Activated naive CD4-positive, alpha-beta T cell treated with anti-CD3 and anti-CD28 coated beads for 36 hours (primary cell): ENCODE measurements at regions of chr6 and their contacts with region 1.

Region 1: DNA sequence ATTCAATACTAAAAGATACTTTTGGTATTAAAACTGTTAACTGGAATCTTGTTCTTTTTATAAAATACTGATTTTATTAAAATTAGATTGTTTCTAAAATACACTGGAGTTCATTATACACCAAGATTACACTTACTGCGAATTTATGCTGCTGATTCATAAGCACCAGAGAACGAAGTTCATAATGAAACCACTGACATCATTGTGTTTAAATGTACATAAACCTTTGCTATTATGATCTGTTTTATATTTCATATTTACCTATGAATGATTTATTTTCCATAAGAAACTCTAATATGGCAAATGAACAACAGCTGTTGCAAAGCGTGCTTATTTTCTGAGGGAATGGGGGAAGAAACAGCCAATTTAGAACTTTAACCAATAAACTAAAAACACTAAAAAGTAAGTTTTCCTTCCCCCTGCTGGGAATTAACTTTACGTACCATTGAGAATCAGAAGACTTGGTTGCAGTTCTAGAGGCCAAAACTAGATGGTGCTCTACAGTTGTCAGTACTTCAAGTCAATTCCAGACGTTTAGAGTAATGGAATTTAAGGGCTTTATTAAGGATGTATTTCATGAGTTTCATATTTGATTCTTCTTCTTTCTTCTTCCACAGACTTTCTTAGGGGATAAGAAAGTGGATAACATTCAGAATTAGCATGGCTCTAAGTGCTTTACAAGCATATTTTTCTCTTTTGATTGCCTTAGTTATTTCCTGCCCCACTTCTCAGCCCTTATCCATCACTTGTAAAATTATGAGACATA is 30.8 kb upstream of the COL19A1 start:
- DNase-seq: no peak
- H3K4me3 Mint-ChIP-seq: no peak overlapping the region
- H3K27ac Mint-ChIP-seq: no peak overlapping the region
- H3K4me1 Mint-ChIP-seq: peaks cover 3% of the 10 kb centered on the region
- H3K27me3 Mint-ChIP-seq: peaks cover 5% of the 10 kb centered on the region

Region 2: DNA sequence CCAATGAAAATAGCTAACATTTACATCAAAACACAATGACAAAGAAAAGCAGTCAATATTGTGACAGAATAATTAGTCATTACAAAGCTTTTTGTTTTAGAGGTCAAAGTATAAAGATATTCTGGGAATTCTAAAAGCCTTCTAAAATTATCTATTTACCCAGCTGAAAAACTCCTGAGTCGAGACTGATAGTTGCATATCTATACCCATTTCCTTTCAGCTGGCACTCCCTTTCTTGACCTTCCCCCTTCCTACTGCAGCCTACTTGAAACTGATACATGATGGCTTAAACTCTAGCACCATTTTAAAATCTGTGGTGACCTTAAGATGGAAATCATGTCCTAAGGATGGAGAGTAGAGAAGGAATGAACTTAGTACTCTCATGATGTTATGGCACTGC is 77.4 kb before region 1 on chr6:
- CTCF ChIA-PET with region 1: no interaction called
- intact Hi-C with region 1: no loop called
- DNase-seq: no peak
- H3K4me3 Mint-ChIP-seq: no peak overlapping the region
- H3K27ac Mint-ChIP-seq: no peak overlapping the region
- H3K4me1 Mint-ChIP-seq: peaks cover 34% of the 10 kb centered on the region
- H3K27me3 Mint-ChIP-seq: no peaks in the 10 kb centered on the region

Region 3: DNA sequence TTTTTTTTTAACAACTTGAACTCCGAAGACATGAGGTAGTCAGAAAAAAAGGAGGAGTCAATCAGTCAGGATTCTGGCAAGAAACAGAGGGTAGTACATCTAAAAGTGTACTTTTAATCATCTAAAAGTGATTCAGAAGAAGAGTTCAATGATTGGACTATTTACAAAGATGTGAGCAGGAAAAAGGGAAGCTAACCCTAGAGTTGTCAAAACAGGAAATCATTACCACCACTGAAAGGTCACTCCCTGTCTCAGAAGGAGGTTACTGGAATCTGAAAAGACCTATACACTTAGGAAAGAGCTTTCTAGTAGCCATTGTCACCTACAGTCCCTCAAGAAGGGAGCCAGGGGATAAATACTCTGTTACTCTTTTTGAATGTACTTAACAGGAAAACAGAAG is 22.1 kb before region 1 on chr6:
- CTCF ChIA-PET with region 1: interaction called, 6 read pairs
- intact Hi-C with region 1: loop called (anchors 1 kb)
- DNase-seq: no peak
- H3K4me3 Mint-ChIP-seq: no peak overlapping the region
- H3K27ac Mint-ChIP-seq: peak overlapping the region; percentile 75
- H3K4me1 Mint-ChIP-seq: peaks cover 54% of the 10 kb centered on the region
- H3K27me3 Mint-ChIP-seq: no peaks in the 10 kb centered on the region

Region 4: GRCh38 chr6:69866770-69867638 is 31.4 kb after region 1 on chr6:
- CTCF ChIA-PET with region 1: no interaction called
- intact Hi-C with region 1: loop called (anchors 1 kb)
- DNase-seq: peak; percentile 64
- H3K4me3 Mint-ChIP-seq: peak overlapping the region; percentile 70
- H3K27ac Mint-ChIP-seq: no peak overlapping the region
- H3K4me1 Mint-ChIP-seq: peaks cover 20% of the 10 kb centered on the region
- H3K27me3 Mint-ChIP-seq: peaks cover 5% of the 10 kb centered on the region

Region 5: DNA sequence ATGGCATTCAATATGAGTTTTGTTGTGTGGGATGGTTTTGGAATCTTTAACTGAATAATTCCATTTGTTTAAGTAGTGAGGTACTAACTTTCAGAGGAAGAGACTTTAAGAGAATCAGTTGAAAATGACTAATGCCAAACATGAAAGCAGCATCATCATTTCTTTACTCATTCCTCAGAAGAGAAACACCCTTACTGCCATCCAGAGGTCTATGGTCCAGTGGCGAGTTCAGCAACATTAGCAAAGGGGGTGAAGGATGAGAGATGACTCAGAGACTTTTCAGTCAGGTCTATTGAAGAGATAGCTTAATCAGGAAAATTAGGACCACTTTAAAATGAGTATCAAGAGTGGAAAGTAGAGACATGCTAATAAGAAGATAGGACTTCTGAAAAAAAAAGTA is 149.6 kb after region 1 on chr6:
- CTCF ChIA-PET with region 1: no interaction called
- intact Hi-C with region 1: loop called (anchors 5 kb)
- DNase-seq: no peak
- H3K4me3 Mint-ChIP-seq: no peak overlapping the region
- H3K27ac Mint-ChIP-seq: no peak overlapping the region
- H3K4me1 Mint-ChIP-seq: no peaks in the 10 kb centered on the region
- H3K27me3 Mint-ChIP-seq: peaks cover 2% of the 10 kb centered on the region

Region 6: DNA sequence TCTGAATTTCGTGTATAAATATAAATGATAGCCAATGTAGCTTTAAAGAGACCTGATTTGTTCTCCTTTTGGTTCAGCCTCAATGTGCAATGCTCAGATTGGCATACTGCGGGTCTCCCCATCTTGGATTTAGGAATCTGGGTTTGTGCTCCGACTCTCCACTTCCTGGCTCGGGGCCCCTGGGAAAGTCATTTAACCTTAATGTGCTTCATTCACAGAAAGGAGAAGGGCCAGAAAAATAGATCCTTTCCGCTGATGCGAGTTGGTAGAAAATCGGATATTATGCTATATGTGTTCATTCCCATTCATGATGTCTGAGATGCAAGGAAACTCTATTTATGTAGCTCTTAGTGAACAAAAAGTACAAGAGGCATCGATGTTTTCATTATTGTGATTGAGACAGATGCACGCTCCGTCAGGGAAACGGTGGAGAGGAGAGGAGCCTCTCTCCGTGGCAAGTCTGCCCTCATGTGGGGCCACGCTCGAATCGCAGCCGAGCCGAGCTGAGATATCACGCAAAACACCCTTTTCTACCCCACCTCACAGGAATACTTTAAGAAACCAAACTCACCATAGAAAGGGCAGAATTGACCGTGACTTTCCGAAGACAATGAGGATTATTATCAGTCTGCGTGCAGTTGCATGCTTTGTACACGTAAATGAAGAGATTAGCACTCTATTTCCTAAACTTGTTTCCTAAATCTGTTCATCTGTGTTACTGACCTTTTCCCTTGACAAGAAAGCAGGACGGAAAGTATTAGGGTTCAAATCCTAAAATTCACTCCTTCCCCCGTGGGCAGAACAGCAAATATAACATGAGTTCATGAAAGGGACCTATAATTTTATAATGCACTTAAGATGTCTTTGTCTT is 330.7 kb after region 1 on chr6:
- CTCF ChIA-PET with region 1: no interaction called
- intact Hi-C with region 1: loop called (anchors 1 kb)
- DNase-seq: peak; percentile 56
- H3K4me3 Mint-ChIP-seq: no peak overlapping the region
- H3K27ac Mint-ChIP-seq: no peak overlapping the region
- H3K4me1 Mint-ChIP-seq: no peaks in the 10 kb centered on the region
- H3K27me3 Mint-ChIP-seq: peaks cover 29% of the 10 kb centered on the region

Region 7: DNA sequence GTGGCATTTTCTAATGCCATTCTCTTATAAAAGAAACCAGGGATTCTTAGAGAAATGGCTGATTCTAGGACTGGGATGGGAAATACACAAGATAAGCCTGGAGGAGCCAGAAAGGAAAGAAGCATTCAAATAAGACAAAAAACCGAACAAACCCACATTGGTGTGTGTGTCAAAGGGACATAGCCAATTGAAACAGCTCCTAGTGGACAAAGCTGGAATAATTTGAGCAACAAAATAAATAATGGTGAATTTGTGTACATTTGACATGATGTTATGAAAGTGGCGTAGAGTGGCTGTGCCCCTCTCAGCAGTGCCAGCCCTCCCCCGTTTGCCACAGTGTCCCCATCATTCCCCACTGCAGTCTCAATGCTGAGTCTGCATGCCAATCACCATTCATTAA is 1065.7 kb after region 1 on chr6:
- CTCF ChIA-PET with region 1: no interaction called
- intact Hi-C with region 1: no loop called
- DNase-seq: no peak
- H3K4me3 Mint-ChIP-seq: no peak overlapping the region
- H3K27ac Mint-ChIP-seq: no peak overlapping the region
- H3K4me1 Mint-ChIP-seq: no peaks in the 10 kb centered on the region
- H3K27me3 Mint-ChIP-seq: peaks cover 10% of the 10 kb centered on the region